ENCODE measurements at regions of chr2 and their contacts with region 1.

Region 1: GRCh38 chr2:233566141-233566960 is at the start of gene USP40:
- DNase-seq: peak; percentile 87 to 90
- H3K4me3 ChIP-seq: peak within 1 kb of the TSS; percentile 76 to 79
- H3K27ac ChIP-seq: peak within 1 kb of the TSS; percentile 89 to 94
- H3K4me1 ChIP-seq: peaks cover 0 to 9% (median 0%) of the 10 kb centered on the region in 4 donors
- H3K27me3 ChIP-seq: no peaks in the 10 kb centered on the region
- CTCF ChIP-seq: no peak

Region 2: DNA sequence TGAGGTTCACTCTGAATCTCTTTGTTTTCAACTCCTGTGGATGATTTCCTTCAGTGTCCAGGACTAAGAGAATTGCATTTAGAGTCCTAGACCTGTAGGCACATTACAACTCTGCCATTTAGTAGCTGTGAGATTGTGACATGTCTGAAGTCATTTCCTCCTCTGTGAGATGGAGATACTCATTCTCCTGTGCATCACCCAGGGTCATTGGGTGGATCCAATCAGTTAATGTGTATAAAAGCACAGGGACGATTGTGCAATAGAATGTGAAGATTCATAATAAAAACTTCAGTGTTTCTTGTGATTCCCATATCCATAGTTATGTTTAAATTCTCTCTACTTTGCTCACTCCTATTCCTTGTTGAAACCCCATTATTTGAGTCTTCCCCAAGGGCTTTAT is 1491.3 kb before region 1 on chr2:
- intact Hi-C with region 1: no loop called
- DNase-seq: no peak
- H3K4me3 ChIP-seq: no peak overlapping the region
- H3K27ac ChIP-seq: no peak overlapping the region
- H3K4me1 ChIP-seq: peaks cover 0 to 7% (median 3%) of the 10 kb centered on the region in 4 donors
- H3K27me3 ChIP-seq: no peaks in the 10 kb centered on the region
- CTCF ChIP-seq: no peak

Region 3: DNA sequence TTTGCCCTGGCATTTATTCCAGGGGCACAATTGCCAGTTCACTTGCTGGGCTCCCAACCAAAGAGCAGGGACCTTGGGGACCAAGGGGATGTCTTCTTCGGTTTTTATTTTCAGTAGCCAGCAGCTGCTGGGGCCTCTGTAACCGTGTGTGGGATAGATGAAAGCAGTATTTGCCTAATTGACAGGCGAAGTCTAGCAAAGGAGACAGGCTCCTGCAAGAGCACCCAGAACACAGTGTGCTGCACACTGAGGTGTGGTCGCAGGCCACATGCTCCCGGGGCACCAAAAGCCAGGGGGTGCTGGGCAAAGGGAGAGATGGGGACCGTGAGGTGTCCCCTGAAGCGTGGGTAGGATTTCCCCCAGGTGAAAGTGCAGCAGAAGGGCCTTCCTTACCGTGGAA is 253.5 kb before region 1 on chr2:
- intact Hi-C with region 1: no loop called
- DNase-seq: no peak
- H3K4me3 ChIP-seq: no peak overlapping the region
- H3K27ac ChIP-seq: no peak overlapping the region
- H3K4me1 ChIP-seq: no peaks in the 10 kb centered on the region
- H3K27me3 ChIP-seq: peaks cover 0 to 6% of the 10 kb centered on the region in 2 donors
- CTCF ChIP-seq: no peak

Region 4: GRCh38 chr2:233480490-233481202 is 85.7 kb before region 1 on chr2:
- intact Hi-C with region 1: loop called (anchors 10 kb)
- DNase-seq: peak in 1 of 2 donors; percentile 21
- H3K4me3 ChIP-seq: no peak overlapping the region
- H3K27ac ChIP-seq: peak overlapping the region; percentile 63 to 68
- H3K4me1 ChIP-seq: peaks cover 0 to 42% (median 25%) of the 10 kb centered on the region in 4 donors
- H3K27me3 ChIP-seq: no peaks in the 10 kb centered on the region
- CTCF ChIP-seq: no peak

Region 5: DNA sequence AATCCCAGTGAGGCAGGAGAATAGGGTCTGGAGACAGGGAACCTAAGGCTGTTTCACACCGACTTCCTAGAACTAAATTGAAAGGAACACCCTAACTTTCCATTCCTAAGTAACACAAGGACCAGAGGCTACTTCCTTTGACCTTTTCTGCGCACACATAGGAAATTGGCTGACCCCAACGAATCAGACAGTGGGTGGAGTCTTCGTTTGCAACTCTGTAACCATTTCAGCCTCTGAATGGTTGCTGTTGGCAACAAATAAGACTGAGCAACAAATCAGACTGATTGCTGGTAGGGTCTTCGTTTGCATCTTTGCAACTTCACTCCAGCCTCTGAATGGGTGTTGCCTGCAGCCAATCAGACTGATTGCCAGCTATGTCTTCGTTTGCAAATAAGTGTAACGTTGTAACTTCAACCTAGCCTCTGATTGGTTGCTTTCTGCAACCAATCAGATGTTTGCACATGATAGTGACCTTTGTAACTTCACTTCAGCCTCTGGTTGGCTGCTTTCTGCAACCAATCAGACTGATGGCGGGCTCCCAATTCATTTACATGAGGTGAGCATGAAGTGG is 34.4 kb before region 1 on chr2:
- intact Hi-C with region 1: no loop called
- DNase-seq: no peak
- H3K4me3 ChIP-seq: no peak overlapping the region
- H3K27ac ChIP-seq: no peak overlapping the region
- H3K4me1 ChIP-seq: no peaks in the 10 kb centered on the region
- H3K27me3 ChIP-seq: no peaks in the 10 kb centered on the region
- CTCF ChIP-seq: no peak

Measured in tibial artery (tissue), 4 donors.